Ascending aorta (tissue), 2 donors: ENCODE measurements at regions of chr3 and their contacts with region 1.

Region 1: GRCh38 chr3:139329345-139329850 is 14.4 kb upstream of the MRPS22 start:
- DNase-seq: peak; percentile 22 to 88
- H3K4me3 ChIP-seq: peak overlapping the region; percentile 35 to 44
- H3K27ac ChIP-seq: no peak overlapping the region
- H3K4me1 ChIP-seq: no peaks in the 10 kb centered on the region
- H3K27me3 ChIP-seq: no peaks in the 10 kb centered on the region
- CTCF ChIP-seq: peak; percentile 88 to 91 (median 89)

Region 2: DNA sequence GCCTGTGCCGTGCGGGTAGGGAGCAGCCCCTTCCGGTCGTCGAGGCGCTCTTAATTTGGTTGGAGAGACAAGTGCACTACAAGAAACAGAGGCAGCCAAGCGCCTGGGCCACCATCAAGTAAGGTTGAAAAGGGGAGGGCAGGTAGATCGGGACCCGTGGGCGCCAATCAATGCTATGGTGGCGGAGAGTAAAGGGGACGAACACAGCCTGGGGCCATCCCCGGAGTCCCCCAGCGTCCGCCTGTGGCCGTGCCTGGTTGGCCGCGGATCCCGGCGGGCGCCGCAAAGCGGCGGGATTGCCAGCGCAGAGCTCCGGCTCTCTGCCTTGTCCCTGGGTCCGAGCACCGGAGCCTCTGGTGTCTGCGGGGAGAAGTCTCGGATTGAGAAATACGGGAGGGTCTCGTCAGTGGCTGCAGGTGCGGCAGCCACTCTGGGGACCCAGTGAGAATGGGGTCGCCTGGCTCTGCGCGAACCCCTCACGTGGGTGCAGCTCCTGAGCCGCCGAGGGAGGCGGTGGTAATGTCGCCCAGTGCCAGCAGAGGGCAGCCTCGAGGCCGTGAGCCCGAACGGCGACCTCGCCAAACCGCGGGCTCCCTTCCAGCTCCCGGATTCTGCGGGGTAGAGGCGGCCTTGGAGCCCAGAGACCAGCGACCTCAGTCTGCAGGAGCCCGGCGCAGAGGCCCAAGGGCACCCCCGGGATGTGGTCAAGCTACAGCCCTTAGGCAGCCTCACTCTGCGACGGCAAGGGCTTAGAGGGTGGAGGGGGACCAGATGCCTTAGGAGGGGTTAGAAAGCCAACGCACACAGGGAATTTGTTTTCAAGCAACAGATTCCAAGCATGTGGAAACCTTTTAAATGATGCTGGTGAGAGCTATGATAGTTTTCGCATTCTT is 393.3 kb before region 1 on chr3:
- intact Hi-C with region 1: loop called (anchors 5 kb)
- DNase-seq: peak in 1 of 2 donors; percentile 85
- H3K4me3 ChIP-seq: peak overlapping the region; percentile 37 to 56
- H3K27ac ChIP-seq: no peak overlapping the region
- H3K4me1 ChIP-seq: peaks cover 12 to 33% of the 10 kb centered on the region in 2 donors
- H3K27me3 ChIP-seq: peaks cover 40% of the 10 kb centered on the region
- CTCF ChIP-seq: peak; percentile 69 to 96 (median 95)

Region 3: GRCh38 chr3:139101396-139101795 is 228.0 kb before region 1 on chr3:
- intact Hi-C with region 1: no loop called
- DNase-seq: peak in 1 of 2 donors; percentile 31
- H3K4me3 ChIP-seq: no peak overlapping the region
- H3K27ac ChIP-seq: no peak overlapping the region
- H3K4me1 ChIP-seq: no peaks in the 10 kb centered on the region
- H3K27me3 ChIP-seq: no peaks in the 10 kb centered on the region
- CTCF ChIP-seq: no peak

Region 4: GRCh38 chr3:139111392-139112229 is 217.8 kb before region 1 on chr3:
- intact Hi-C with region 1: loop called (anchors 2 kb)
- DNase-seq: peak in 1 of 2 donors; percentile 61
- H3K4me3 ChIP-seq: no peak overlapping the region
- H3K27ac ChIP-seq: no peak overlapping the region
- H3K4me1 ChIP-seq: no peaks in the 10 kb centered on the region
- H3K27me3 ChIP-seq: no peaks in the 10 kb centered on the region
- CTCF ChIP-seq: peak; percentile 16 to 63 (median 54)

Region 5: DNA sequence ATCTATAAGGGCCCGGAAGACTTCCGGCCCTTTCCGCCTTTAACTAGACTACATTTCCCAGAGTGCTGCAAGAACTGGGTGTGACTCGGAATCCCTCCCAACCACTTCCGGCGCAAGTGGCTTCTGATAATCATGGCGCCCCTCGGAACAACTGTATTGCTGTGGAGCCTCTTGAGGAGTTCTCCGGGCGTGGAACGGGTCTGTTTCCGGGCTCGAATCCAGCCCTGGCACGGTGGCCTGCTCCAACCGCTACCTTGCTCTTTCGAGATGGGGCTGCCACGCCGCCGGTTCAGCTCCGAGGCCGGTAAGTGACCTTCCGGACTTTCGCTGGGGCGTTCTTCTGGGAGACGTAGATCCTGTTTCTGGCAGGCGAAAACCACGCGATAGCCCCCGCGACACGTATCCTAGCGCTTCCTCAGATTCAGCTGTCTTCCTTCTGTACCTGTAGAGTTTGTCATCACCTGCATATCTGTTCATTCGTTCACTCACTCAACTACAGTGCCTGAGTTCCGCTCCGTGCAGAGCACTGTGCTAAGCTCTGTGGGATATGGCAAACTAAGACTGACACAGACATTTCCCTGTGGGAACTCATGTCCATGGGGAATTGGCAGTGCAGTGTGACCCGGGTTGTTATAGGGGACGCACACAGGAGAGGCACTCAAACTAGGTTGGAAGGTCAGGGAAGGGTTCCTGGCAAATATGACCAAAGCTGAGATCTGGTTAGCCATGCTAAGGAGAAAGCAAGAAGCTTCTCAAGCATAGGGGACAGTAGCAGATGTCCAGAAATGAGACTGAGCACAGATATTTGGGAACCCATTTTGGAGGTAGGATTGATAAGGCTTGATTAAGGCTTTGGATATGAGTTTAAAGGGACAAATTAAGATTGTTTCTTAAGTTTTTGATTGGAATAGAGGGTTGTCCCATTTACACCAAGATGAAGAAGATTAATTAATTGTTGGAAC is 14.8 kb after region 1 on chr3 and contains the start of gene MRPS22:
- intact Hi-C with region 1: no loop called
- DNase-seq: peak; percentile 43 to 89
- H3K4me3 ChIP-seq: peak within 1 kb of the TSS; percentile 76 to 90
- H3K27ac ChIP-seq: peak within 1 kb of the TSS; percentile 66 to 73
- H3K4me1 ChIP-seq: peaks cover 0 to 12% of the 10 kb centered on the region in 2 donors
- H3K27me3 ChIP-seq: no peaks in the 10 kb centered on the region
- CTCF ChIP-seq: no peak
- total RNA-seq, gene MRPS22: 8.3 TPM